Sigmoid colon (tissue), 7 donors: ENCODE measurements at regions of chr3 and their contacts with region 1.

Region 1: DNA sequence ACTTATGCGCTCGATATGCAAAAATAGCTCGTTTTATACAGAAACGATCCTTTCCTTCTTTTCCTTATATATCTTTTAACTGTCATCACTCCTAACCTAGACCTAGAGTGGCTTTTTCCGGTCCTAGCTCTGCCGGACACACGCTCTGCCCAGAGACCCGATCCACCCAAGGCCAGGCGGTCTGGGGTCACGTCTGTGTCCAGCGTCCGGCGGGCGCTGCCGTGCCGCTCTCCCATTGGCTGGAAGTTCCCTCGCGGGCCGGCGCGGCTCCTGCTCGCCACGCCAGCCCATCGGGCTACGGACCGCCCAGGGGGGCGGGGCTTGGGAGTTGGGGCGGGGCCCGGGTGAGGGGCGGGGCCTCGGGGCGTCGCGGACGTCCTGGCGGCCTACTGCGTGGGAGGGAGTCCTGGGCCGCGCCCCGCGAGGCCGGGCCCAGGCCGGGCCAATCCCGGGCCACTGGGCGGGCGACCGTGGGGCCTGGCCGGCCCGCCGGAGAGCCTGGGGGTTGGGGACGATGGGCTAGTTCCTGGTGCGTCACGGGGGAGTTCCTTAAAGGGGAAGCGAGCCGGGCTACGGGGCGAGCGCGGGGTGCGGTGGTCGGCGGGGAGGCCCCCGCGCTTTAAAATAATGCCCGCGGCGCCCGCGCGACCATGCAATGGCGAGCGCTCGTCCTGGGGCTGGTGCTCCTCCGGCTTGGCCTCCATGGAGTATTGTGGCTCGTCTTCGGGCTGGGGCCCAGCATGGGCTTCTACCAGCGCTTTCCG is at the start of gene EDEM1:
- DNase-seq: peak; percentile 97
- H3K4me3 ChIP-seq: peak within 1 kb of the TSS; percentile 59 to 96 (median 86)
- H3K27ac ChIP-seq: peak within 1 kb of the TSS; percentile 89 to 98 (median 96)
- H3K4me1 ChIP-seq: peaks cover 0 to 46% (median 28%) of the 10 kb centered on the region in 4 donors
- H3K27me3 ChIP-seq: no peaks in the 10 kb centered on the region
- CTCF ChIP-seq: no peak
- EP300 ChIP-seq: no peak
- POLR2A ChIP-seq: peak; percentile 55 to 75
- total RNA-seq, gene EDEM1: 14.3 to 23.8 (median 20.5) TPM

Region 2: DNA sequence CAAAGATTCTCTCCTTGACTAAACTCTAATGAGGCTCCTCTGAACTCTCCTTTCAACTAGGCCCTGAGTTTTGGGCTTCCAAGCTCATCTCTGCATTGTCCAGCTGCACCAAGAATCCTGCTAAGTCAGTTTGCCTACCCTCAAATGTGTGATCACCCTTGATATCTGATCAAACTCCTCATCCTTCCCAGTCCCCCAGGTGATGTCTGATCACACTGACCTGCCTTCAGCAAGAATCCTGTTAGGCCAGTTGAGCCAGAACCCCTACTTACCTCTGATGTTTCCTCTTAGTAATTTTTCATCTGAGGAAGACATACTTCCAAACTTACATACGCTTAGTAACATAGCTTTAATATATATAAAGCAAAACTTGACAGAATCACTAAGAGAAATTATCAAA is 749.0 kb before region 1 on chr3:
- intact Hi-C with region 1: no loop called
- DNase-seq: no peak
- H3K4me3 ChIP-seq: no peak overlapping the region
- H3K27ac ChIP-seq: no peak overlapping the region
- H3K4me1 ChIP-seq: no peaks in the 10 kb centered on the region
- H3K27me3 ChIP-seq: no peaks in the 10 kb centered on the region
- CTCF ChIP-seq: no peak
- EP300 ChIP-seq: no peak
- POLR2A ChIP-seq: no peak

Region 3: DNA sequence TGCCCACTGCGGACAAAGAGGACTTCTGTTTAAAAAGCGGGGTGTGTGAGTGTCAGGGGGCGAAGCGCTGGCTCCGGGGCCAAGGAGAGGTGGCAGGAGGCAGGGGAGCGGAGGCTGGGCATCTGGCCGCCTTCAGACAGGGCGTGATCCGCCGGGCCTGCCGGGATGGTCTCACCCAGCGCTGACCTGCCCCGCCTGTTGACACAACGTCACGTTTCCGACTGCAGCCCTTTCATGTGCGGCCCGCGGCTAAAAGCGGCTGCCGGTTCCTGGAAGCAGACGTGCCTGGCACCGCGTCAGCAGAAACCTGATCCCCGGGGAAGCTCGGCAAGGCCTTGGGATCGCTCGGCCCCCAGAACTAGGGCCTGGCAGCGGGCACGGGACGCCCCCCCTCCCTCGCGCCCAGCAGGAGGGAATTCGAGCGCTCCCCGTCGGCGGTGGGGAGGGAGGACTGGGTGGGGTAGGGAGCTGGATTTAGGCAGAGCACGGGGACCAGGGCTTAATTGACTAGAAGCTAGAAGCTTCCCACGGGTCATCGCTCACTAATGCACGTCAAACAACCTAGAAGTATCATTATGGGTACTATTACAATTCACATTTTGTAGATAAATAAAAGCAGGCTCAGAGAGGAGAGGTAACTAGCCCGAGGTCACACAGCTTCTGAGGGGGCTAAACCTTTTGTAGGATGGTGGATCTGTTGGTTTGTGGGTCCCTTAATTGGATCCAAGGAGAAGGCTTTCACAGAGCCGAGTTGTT is 200.4 kb before region 1 on chr3:
- intact Hi-C with region 1: loop called (anchors 5 kb)
- DNase-seq: peak; percentile 99
- H3K4me3 ChIP-seq: peak overlapping the region; percentile 21 to 54 (median 46)
- H3K27ac ChIP-seq: peak overlapping the region; percentile 98 to 99 (median 98)
- H3K4me1 ChIP-seq: peaks cover 0 to 65% (median 56%) of the 10 kb centered on the region in 4 donors
- H3K27me3 ChIP-seq: no peaks in the 10 kb centered on the region
- CTCF ChIP-seq: no peak
- EP300 ChIP-seq: peak; percentile 75 to 99 (median 90)
- POLR2A ChIP-seq: peak; percentile 51 to 55

Region 4: DNA sequence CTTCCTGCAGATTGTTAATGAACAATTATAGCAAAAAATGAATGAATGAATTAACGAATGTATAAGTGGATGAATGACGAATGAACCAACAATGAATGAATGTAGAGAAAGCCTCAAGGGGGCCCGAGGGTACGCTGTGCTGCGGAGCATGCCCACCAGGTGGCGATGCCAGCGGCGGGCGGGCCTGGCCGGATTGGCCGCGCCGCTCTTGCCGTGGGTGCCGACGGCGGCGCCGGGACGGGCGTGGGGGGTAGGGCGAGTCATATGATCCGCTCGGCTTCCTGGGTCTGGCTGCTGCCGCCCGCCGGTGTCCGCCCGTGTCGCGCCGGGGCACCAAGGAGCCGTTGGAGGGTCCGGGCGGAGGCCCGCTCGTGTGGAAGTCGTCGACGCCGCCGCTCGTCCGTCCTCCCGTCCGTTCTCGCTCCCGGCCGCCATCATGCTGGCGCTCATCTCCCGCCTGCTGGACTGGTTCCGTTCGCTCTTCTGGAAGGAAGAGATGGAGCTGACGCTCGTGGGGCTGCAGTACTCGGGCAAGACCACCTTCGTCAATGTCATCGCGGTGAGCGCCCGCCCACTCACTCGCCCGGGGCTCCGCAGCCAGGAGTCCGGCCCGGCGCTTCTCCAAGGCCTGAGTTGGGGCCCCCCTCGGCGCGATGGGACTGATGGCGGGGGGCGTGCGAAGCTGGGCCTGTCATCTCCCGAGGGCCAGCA is 65.2 kb before region 1 on chr3 and contains the start of gene ARL8B:
- intact Hi-C with region 1: loop called (anchors 1 kb)
- DNase-seq: peak; percentile 94
- H3K4me3 ChIP-seq: peak within 1 kb of the TSS; percentile 89 to 100 (median 96)
- H3K27ac ChIP-seq: peak within 1 kb of the TSS; percentile 87 to 98 (median 92)
- H3K4me1 ChIP-seq: peaks cover 0 to 49% (median 35%) of the 10 kb centered on the region in 4 donors
- H3K27me3 ChIP-seq: no peaks in the 10 kb centered on the region
- CTCF ChIP-seq: peak; percentile 72 to 92 (median 90)
- EP300 ChIP-seq: no peak
- POLR2A ChIP-seq: peak; percentile 27 to 57
- total RNA-seq, gene ARL8B: 47.2 to 55.9 (median 50.3) TPM

Region 5: GRCh38 chr3:5389057-5389456 is 201.7 kb after region 1 on chr3:
- intact Hi-C with region 1: no loop called
- DNase-seq: no peak
- H3K4me3 ChIP-seq: no peak overlapping the region
- H3K27ac ChIP-seq: no peak overlapping the region
- H3K4me1 ChIP-seq: no peaks in the 10 kb centered on the region
- H3K27me3 ChIP-seq: no peaks in the 10 kb centered on the region
- CTCF ChIP-seq: no peak
- EP300 ChIP-seq: no peak
- POLR2A ChIP-seq: no peak